Dorsolateral prefrontal cortex (tissue), 120 donors: ENCODE measurements at regions of chr3 and their contacts with region 1.

Region 1: DNA sequence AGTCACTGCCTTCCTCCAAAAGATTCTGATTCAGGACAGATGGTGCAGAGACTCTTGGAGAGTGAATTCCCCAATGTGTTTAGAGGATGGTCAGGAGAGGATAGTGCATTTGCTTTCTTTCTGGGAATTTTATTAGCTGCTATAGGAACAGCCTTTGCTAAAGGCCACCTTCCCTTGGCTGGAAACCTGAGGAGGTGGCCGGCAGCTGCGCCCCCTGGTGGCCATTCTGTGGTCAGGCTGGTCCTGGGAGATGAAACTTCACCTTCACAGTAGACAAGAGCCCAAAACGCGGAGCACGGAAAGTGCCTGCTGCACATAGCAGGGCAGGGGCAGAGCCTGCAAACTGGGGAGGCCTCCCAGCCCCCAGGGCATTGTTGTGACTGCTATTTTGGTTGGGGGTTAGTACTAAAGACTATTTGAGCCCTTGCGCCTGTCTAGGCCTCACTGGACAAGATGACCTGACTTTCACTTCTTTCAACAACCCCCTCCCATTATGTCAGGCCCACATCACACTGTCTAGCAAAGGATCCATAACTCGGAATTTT is 34.3 kb downstream of the SEC22C start:
- DNase-seq: peak in 9 of 10 donors; percentile 67 to 85 (median 74)
- H3K4me3 ChIP-seq: no peak overlapping the region
- H3K27ac ChIP-seq: peak overlapping the region in 29 of 59 donors; percentile 3 to 59 (median 32)
- H3K27me3 ChIP-seq: no peaks in the 10 kb centered on the region
- CTCF ChIP-seq: peak; percentile 88 to 99 (median 96)

Region 2: GRCh38 chr3:42118762-42119361 is 428.6 kb before region 1 on chr3:
- intact Hi-C with region 1: loop called in 1 of 2 experiments (anchors 10 kb)
- DNase-seq: peak in 4 of 10 donors; percentile 49 to 70 (median 57)
- H3K4me3 ChIP-seq: no peak overlapping the region
- H3K27ac ChIP-seq: peak overlapping the region in 13 of 59 donors; percentile 1 to 64 (median 27)
- H3K27me3 ChIP-seq: no peaks in the 10 kb centered on the region
- CTCF ChIP-seq: peak in 55 of 56 donors; percentile 22 to 78 (median 57)

Region 3: DNA sequence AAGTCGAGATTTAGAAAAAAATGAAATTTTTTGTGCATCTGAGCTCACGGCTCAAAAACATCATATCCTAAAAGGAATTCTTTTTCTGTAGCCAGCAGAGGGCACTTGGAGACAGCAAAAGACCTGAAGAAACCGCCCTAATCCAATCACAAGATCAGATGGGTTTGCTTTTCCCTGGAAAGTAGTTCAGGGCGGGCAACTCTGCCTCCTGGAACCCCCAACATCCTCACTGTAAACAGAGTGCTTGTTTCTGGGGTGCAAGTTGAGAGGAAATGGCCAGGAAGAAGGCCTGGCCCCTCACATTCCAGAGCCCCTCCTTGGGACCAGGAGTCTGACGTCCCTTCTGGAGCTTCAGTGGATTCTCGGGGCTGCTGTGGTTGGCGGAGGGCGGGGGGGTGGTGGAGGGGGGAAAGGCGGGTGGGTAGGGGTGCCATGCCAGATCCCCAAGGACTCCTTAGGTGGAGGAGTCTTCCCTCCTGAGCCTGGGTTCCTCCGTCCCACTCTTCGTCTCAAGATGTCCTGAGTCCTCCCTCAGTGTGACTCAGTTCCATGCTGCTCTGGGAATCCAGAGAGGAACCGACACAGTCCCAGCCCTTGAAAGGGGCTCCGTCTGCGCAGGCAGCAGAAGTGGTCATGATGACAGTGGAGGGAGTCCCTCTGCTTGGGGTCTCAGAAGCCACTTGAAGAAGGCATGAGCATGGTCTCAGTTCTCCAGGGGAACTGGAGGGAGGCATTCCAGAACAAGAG is 317.4 kb before region 1 on chr3:
- intact Hi-C with region 1: loop called in 1 of 2 experiments (anchors 5 kb)
- DNase-seq: no peak
- H3K4me3 ChIP-seq: peak overlapping the region in 42 of 59 donors; percentile 4 to 56 (median 30)
- H3K27ac ChIP-seq: peak overlapping the region in 17 of 59 donors; percentile 7 to 73 (median 41)
- H3K27me3 ChIP-seq: peaks cover 0 to 4% (median 0%) of the 10 kb centered on the region in 45 donors
- CTCF ChIP-seq: peak; percentile 23 to 82 (median 67)

Region 4: GRCh38 chr3:42247576-42248027 is 299.9 kb before region 1 on chr3:
- intact Hi-C with region 1: loop called (anchors 5 kb)
- DNase-seq: peak in 6 of 10 donors; percentile 47 to 76 (median 65)
- H3K4me3 ChIP-seq: peak overlapping the region in 14 of 59 donors; percentile 1 to 41 (median 12)
- H3K27ac ChIP-seq: no peak overlapping the region
- H3K27me3 ChIP-seq: no peaks in the 10 kb centered on the region
- CTCF ChIP-seq: peak; percentile 61 to 92 (median 82)

Region 5: DNA sequence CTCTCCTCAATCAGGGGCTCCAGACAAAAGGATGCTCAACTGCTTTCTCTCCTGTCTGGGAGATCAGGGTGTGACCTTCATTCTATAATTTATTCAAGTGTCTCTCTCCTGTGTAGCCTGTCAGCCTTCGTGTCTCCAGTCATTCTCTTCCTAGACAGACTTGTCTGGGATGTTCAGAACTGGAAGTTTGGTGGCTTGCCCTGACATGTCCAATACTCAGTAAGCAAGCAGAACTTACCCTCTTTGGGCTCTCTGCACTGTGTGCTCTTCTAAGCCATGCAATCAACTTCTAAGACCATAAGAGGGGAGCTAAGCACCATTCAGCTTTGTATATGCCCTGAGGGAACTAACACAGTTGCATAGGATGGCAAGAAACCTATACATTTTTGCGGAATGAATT is 275.9 kb after region 1 on chr3:
- intact Hi-C with region 1: no loop called
- DNase-seq: no peak
- H3K4me3 ChIP-seq: no peak overlapping the region
- H3K27ac ChIP-seq: no peak overlapping the region
- H3K27me3 ChIP-seq: no peaks in the 10 kb centered on the region
- CTCF ChIP-seq: no peak

Region 6: DNA sequence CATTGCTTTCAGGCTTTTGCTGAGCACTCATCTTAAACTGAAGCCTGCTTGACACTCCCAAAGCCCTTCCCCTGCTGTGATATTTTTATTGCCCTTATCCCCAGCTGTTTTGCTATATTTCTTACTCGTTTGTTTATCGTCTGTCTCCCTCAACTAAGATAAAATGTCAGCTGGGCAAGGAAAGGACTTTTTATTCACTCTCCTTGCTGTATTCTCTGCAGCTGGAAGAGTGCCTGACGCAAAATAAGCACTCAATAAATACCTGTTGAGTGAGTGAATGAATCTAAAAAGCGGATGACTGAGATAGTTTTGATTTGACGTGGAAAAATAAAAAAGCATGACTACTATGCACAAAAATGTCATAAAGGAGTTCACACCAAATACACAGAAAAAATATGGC is 643.2 kb after region 1 on chr3:
- intact Hi-C with region 1: no loop called
- DNase-seq: no peak
- H3K4me3 ChIP-seq: no peak overlapping the region
- H3K27ac ChIP-seq: no peak overlapping the region
- H3K27me3 ChIP-seq: peaks cover 0 to 34% (median 0%) of the 10 kb centered on the region in 45 donors
- CTCF ChIP-seq: no peak